Sciatic nerve (tissue), 2 donors: ENCODE measurements at regions of chr14 and their contacts with region 1.

Region 1: DNA sequence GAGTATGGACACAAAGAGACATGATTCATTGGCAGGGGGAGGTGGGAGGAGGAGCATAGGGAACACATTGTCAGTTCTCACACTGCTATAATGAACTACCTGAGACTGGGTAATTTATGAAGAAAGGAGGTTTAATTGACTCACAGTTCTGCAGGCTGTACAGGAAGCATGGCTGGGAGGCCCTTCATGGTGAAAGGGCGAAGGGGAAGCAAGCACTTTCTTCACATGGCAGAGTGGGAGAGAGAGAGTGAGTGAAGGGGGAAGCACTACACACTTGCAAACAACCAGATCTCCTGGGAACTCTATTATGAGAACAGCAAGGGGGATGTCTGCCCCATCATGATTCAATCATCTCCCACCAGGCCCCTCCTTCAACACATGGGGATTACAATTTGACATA is 391.8 kb downstream of the BMP4 start:
- DNase-seq: no peak
- ATAC-seq: no peak

Region 2: DNA sequence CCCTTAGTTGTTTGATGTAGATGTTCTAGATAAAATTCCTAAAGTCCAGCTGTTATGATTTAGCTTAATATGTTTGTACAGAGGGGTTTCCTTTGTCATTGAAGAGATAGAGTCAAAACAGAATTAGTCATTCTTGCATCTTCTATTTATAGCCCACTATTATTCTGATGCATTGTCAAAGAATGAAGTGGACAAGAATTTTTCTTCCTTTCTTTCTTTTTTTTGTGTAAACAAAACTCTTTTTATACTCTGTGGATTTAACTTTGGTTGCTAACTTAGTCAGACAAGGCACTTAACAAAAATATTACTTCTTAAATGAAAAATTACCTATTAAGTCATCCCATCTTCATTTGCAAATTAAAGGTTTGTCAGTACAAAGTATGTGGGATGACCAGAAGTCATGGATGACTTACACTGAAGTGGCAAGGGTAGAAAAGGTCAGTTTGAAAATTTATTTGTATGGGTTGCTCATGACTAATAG is 196.1 kb before region 1 on chr14:
- intact Hi-C with region 1: no loop called
- DNase-seq: no peak
- ATAC-seq: no peak

Region 3: DNA sequence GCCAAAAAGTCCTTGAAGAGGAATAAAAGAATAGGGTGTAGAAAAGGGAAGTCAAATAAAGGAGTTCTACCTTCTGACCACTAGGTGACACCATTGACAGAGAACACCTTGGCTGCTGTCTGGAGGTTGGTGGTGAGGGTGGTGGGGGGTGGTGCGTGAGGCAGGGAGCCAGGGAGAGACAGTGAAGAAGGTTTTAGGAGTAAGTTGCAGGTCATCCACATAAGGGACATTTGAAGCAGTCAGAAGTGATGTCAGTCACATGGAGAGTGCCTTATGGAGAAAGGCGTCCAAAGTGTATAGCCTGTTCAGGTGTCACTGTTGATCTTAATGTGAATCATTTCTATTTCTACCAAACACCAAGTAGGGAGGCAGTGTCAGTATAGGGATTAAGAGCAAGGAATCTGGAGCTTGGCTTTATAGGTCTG is 132.5 kb before region 1 on chr14:
- intact Hi-C with region 1: no loop called
- DNase-seq: no peak
- ATAC-seq: no peak

Region 4: GRCh38 chr14:53715193-53715721 is 150.4 kb after region 1 on chr14:
- intact Hi-C with region 1: loop called (anchors 5 kb)
- DNase-seq: no peak
- ATAC-seq: peak; percentile 78